Activated CD4-positive, alpha-beta memory T cell treated with anti-CD3 and anti-CD28 coated beads for 36 hours (primary cell): ENCODE measurements at regions of chr2 and their contacts with region 1.

Region 1: GRCh38 chr2:31945572-31945935 is 65.3 kb downstream of the MEMO1 start:
- DNase-seq: no peak
- H3K4me3 Mint-ChIP-seq: no peak overlapping the region
- H3K27ac Mint-ChIP-seq: peak overlapping the region; percentile 49
- H3K4me1 Mint-ChIP-seq: peaks cover 58% of the 10 kb centered on the region
- H3K27me3 Mint-ChIP-seq: no peaks in the 10 kb centered on the region

Region 2: DNA sequence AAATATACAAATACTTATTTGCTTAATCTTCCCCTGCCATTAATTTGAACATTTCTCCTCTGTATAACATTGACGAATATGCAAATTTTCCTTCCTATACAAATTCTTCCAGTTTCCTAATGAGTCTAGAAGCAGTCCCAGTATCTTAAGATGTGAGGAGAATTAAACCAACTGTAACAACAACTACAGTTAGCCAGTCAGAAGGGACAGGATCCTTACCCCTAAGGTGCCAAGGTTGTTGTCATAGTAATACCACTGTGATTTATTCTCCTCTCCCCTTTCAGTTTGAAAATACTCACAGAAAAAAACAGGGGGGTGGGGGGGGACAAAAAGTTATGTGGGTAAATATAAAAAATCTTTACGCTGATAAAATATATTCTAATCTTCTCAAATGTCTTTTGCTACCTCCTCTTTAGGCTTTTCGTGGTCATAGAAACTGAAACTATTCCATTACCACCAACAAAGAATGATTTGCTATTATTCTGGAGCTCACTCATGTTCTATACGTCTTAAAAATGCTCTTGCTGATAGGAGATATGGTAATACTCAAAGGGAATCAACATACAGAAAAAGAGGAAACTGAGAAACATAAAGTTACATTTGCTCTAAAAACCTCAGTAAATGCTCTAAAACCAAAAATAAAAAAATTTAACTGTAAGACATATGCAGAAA is 42.3 kb before region 1 on chr2:
- CTCF ChIA-PET with region 1: no interaction called
- POLR2A ChIA-PET with region 1: no interaction called
- intact Hi-C with region 1: no loop called
- DNase-seq: no peak
- H3K4me3 Mint-ChIP-seq: no peak overlapping the region
- H3K27ac Mint-ChIP-seq: no peak overlapping the region
- H3K4me1 Mint-ChIP-seq: peaks cover 8% of the 10 kb centered on the region
- H3K27me3 Mint-ChIP-seq: no peaks in the 10 kb centered on the region

Region 3: GRCh38 chr2:31962757-31963361 is 17.3 kb after region 1 on chr2:
- CTCF ChIA-PET with region 1: interaction called, 4 read pairs
- POLR2A ChIA-PET with region 1: no interaction called
- intact Hi-C with region 1: loop called (anchors 2 kb)
- DNase-seq: peak; percentile 83
- H3K4me3 Mint-ChIP-seq: no peak overlapping the region
- H3K27ac Mint-ChIP-seq: peak overlapping the region; percentile 75
- H3K4me1 Mint-ChIP-seq: peaks cover 51% of the 10 kb centered on the region
- H3K27me3 Mint-ChIP-seq: no peaks in the 10 kb centered on the region